CD8-positive, alpha-beta T cell (primary cell): ENCODE measurements at regions of chr11 and their contacts with region 1.

Region 1: GRCh38 chr11:65418711-65419459 is 3.7 kb upstream of the NEAT1 start:
- DNase-seq: peak in 8 of 9 experiments; percentile 71 to 90 (median 82)
- ATAC-seq: peak; percentile 4
- H3K4me3 ChIP-seq: peak overlapping the region; percentile 76 to 95
- H3K4me3 Mint-ChIP-seq: peak overlapping the region; percentile 94
- H3K27ac ChIP-seq: peak overlapping the region; percentile 99 to 100
- H3K27ac Mint-ChIP-seq: peak overlapping the region; percentile 98
- H3K4me1 ChIP-seq: peaks cover 58% of the 10 kb centered on the region
- H3K4me1 Mint-ChIP-seq: peaks cover 55% of the 10 kb centered on the region
- H3K27me3 ChIP-seq: no peaks in the 10 kb centered on the region
- H3K27me3 Mint-ChIP-seq: no peaks in the 10 kb centered on the region
- CTCF ChIP-seq: no peak

Region 2: GRCh38 chr11:65026810-65027209 is 392.1 kb before region 1 on chr11:
- CTCF ChIA-PET with region 1: no interaction called
- POLR2A ChIA-PET with region 1: no interaction called
- intact Hi-C with region 1: no loop called
- DNase-seq: no peak
- ATAC-seq: no peak
- H3K4me3 ChIP-seq: peak overlapping the region; percentile 34 to 54
- H3K4me3 Mint-ChIP-seq: peak overlapping the region; percentile 69
- H3K27ac ChIP-seq: peak overlapping the region in 1 of 2 experiments; percentile 71
- H3K27ac Mint-ChIP-seq: peak overlapping the region; percentile 80
- H3K4me1 ChIP-seq: peaks cover 19% of the 10 kb centered on the region
- H3K4me1 Mint-ChIP-seq: peaks cover 18% of the 10 kb centered on the region
- H3K27me3 ChIP-seq: no peaks in the 10 kb centered on the region
- H3K27me3 Mint-ChIP-seq: no peaks in the 10 kb centered on the region
- CTCF ChIP-seq: no peak

Region 3: GRCh38 chr11:65366340-65366773 is 52.5 kb before region 1 on chr11:
- CTCF ChIA-PET with region 1: interaction called, 20 read pairs
- POLR2A ChIA-PET with region 1: no interaction called
- intact Hi-C with region 1: loop called (anchors 1 to 10 kb)
- DNase-seq: peak in 3 of 9 experiments; percentile 31 to 80 (median 70)
- ATAC-seq: peak; percentile 92
- H3K4me3 ChIP-seq: no peak overlapping the region
- H3K4me3 Mint-ChIP-seq: no peak overlapping the region
- H3K27ac ChIP-seq: no peak overlapping the region
- H3K27ac Mint-ChIP-seq: no peak overlapping the region
- H3K4me1 ChIP-seq: peaks cover 6% of the 10 kb centered on the region
- H3K4me1 Mint-ChIP-seq: peaks cover 5% of the 10 kb centered on the region
- H3K27me3 ChIP-seq: no peaks in the 10 kb centered on the region
- H3K27me3 Mint-ChIP-seq: no peaks in the 10 kb centered on the region
- CTCF ChIP-seq: peak; percentile 81

Region 4: DNA sequence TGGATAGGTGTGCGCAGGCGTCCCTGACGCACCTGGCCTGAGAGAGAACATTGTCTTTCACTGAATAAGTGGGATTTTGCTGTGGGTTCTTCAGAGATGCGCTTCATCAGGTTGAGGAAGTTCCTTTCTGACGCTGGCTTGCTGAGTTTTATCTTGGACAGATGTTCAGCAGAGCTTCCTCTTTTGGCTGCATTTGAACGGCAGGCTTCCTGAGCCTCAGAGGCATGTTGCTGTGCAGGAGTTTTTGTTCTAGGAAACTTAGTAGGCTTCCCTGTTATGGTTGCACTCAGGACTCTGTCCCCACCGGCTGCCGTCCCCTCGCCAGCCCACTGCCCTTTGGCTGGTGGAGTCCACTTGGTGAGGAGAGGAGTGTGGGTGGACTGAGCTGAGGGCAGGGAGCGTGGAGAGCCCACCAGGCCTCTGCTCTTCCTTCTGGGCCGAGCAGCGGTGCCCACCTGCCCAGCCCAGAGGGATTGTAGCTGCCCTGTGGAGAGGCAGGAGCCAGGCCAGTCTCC is 15.2 kb before region 1 on chr11:
- CTCF ChIA-PET with region 1: interaction called, 31 read pairs
- POLR2A ChIA-PET with region 1: no interaction called
- intact Hi-C with region 1: no loop called
- DNase-seq: peak in 2 of 9 experiments; percentile 15 to 34
- ATAC-seq: no peak
- H3K4me3 ChIP-seq: no peak overlapping the region
- H3K4me3 Mint-ChIP-seq: no peak overlapping the region
- H3K27ac ChIP-seq: no peak overlapping the region
- H3K27ac Mint-ChIP-seq: peak overlapping the region; percentile 64
- H3K4me1 ChIP-seq: no peaks in the 10 kb centered on the region
- H3K4me1 Mint-ChIP-seq: peaks cover 5% of the 10 kb centered on the region
- H3K27me3 ChIP-seq: no peaks in the 10 kb centered on the region
- H3K27me3 Mint-ChIP-seq: no peaks in the 10 kb centered on the region
- CTCF ChIP-seq: no peak

Region 5: DNA sequence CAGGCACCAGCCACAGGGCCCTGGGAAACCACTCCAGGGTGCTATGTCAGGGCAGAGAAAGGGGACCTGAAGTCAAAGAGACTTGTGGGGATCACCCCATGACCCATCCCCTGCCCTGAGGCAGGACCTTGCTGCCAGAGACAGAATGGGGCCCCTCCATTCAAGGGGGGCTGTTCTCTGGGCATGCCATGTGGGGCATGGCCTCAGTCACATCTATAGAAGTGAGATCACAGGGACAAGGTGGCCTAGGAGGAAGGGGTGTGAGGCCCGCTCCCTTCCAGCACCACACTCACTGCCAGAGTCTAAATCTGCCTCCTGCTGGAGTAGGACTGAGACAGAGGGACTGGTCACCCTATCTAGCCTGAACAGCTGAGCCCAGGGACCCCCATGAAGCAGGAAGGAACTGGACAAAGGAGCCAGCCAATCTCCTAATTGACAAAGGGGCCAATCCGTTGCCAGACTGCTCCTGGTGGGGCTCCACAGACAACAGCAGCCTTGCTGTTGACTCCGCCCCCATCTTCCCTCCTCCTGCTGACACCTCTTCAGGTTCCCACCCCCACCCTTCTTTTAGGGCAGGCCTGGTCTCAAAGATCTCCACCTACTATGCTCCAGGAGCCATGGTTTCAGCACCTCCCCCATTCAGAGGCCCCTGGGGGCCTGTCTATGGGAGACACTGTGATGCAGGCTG is 29.7 kb after region 1 on chr11:
- CTCF ChIA-PET with region 1: interaction called, 20 read pairs
- POLR2A ChIA-PET with region 1: interaction called, 7 read pairs
- intact Hi-C with region 1: no loop called
- DNase-seq: peak in 2 of 9 experiments; percentile 41 to 42
- ATAC-seq: no peak
- H3K4me3 ChIP-seq: no peak overlapping the region
- H3K4me3 Mint-ChIP-seq: no peak overlapping the region
- H3K27ac ChIP-seq: peak overlapping the region in 1 of 2 experiments; percentile 31
- H3K27ac Mint-ChIP-seq: no peak overlapping the region
- H3K4me1 ChIP-seq: no peaks in the 10 kb centered on the region
- H3K4me1 Mint-ChIP-seq: peaks cover 10% of the 10 kb centered on the region
- H3K27me3 ChIP-seq: no peaks in the 10 kb centered on the region
- H3K27me3 Mint-ChIP-seq: no peaks in the 10 kb centered on the region
- CTCF ChIP-seq: no peak

Region 6: GRCh38 chr11:65506770-65507505 is 88.1 kb after region 1 on chr11:
- CTCF ChIA-PET with region 1: interaction called, 229 read pairs
- POLR2A ChIA-PET with region 1: interaction called, 1,786 read pairs
- intact Hi-C with region 1: loop called (anchors 1 kb)
- DNase-seq: peak in 6 of 9 experiments; percentile 32 to 74 (median 62)
- ATAC-seq: peak; percentile 37
- H3K4me3 ChIP-seq: peak overlapping the region in 1 of 2 experiments; percentile 72
- H3K4me3 Mint-ChIP-seq: no peak overlapping the region
- H3K27ac ChIP-seq: peak overlapping the region; percentile 34 to 67
- H3K27ac Mint-ChIP-seq: peak overlapping the region; percentile 89
- H3K4me1 ChIP-seq: peaks cover 41% of the 10 kb centered on the region
- H3K4me1 Mint-ChIP-seq: peaks cover 51% of the 10 kb centered on the region
- H3K27me3 ChIP-seq: no peaks in the 10 kb centered on the region
- H3K27me3 Mint-ChIP-seq: no peaks in the 10 kb centered on the region
- CTCF ChIP-seq: no peak